MCF 10A (cell line): ENCODE measurements at regions of chr20 and their contacts with region 1.

Region 1: DNA sequence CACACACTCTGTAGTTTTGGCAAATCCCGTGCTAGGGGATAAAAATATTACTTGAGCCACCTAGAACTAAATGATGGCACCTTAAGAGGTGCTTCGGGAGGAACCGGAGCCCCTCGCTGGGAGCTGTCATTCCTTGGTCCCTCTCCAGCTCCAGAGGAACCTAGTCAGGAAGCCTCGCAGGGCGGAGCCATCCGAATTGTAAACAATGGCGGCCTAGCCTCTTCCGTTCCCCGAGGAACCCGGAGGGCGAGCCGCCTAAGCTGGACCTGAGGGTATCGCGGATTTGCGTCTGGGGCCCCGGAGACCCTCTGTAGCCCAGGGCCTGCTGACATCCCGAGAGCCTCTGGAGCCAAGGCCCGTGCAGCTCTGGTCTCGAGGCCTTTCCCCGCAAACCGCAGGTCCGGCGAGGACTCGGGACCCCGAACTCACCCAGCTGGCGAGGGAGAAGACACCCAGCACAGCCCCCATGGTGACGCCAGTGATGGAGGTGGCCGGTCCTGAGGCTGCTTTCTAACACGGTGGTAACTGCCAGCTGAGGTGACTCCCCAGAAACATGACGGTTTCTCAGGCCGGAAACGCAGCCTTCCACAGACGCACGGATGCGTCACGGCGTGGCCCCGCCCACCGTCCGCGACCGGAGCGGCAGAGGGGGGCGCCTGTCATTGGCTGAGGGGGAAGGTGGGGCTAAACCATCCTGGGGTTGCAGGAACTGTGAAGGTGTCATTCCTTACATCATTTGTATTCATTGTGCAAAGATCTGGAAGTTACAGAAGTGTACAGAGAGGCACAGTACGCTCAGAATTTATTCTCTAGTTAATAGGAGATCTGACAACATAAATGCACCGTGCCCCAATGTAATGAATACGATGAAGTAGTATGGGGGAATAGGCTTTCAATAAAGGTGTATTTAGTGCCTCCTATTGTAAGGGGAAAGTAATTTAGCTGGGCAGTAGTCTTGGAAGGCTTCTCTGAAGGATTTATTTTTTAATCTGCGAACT is at the start of gene SERINC3:
- DNase-seq: peak; percentile 95
- H3K4me3 Mint-ChIP-seq: peak within 1 kb of the TSS; percentile 84
- H3K27ac Mint-ChIP-seq: peak within 1 kb of the TSS; percentile 95
- H3K4me1 Mint-ChIP-seq: peaks cover 35% of the 10 kb centered on the region
- H3K27me3 Mint-ChIP-seq: no peaks in the 10 kb centered on the region
- CTCF ChIP-seq: no peak
- total RNA-seq, gene SERINC3: 104 and 126 TPM in 2 replicates

Region 2: GRCh38 chr20:44342248-44342647 is 179.5 kb before region 1 on chr20:
- CTCF ChIA-PET with region 1: no interaction called
- POLR2A ChIA-PET with region 1: no interaction called
- intact Hi-C with region 1: no loop called
- DNase-seq: no peak
- H3K4me3 Mint-ChIP-seq: no peak overlapping the region
- H3K27ac Mint-ChIP-seq: no peak overlapping the region
- H3K4me1 Mint-ChIP-seq: no peaks in the 10 kb centered on the region
- H3K27me3 Mint-ChIP-seq: no peaks in the 10 kb centered on the region
- CTCF ChIP-seq: no peak

Region 3: GRCh38 chr20:44475694-44476560 is 45.9 kb before region 1 on chr20 and contains the start of gene TTPAL:
- CTCF ChIA-PET with region 1: interaction called, 5 read pairs
- POLR2A ChIA-PET with region 1: interaction called, 62 read pairs
- intact Hi-C with region 1: loop called (anchors 10 kb)
- DNase-seq: peak; percentile 89
- H3K4me3 Mint-ChIP-seq: peak within 1 kb of the TSS; percentile 98
- H3K27ac Mint-ChIP-seq: peak within 1 kb of the TSS; percentile 98
- H3K4me1 Mint-ChIP-seq: peaks cover 23% of the 10 kb centered on the region
- H3K27me3 Mint-ChIP-seq: no peaks in the 10 kb centered on the region
- CTCF ChIP-seq: no peak
- total RNA-seq, gene TTPAL: 34.1 and 35.4 TPM in 2 replicates

Region 4: GRCh38 chr20:44501448-44501847 is 20.3 kb before region 1 on chr20:
- CTCF ChIA-PET with region 1: interaction called, 6 read pairs
- POLR2A ChIA-PET with region 1: interaction called, 56 read pairs
- intact Hi-C with region 1: loop called (anchors 2 kb)
- DNase-seq: peak; percentile 27
- H3K4me3 Mint-ChIP-seq: no peak overlapping the region
- H3K27ac Mint-ChIP-seq: peak overlapping the region; percentile 10
- H3K4me1 Mint-ChIP-seq: peaks cover 23% of the 10 kb centered on the region
- H3K27me3 Mint-ChIP-seq: no peaks in the 10 kb centered on the region
- CTCF ChIP-seq: no peak

Region 5: DNA sequence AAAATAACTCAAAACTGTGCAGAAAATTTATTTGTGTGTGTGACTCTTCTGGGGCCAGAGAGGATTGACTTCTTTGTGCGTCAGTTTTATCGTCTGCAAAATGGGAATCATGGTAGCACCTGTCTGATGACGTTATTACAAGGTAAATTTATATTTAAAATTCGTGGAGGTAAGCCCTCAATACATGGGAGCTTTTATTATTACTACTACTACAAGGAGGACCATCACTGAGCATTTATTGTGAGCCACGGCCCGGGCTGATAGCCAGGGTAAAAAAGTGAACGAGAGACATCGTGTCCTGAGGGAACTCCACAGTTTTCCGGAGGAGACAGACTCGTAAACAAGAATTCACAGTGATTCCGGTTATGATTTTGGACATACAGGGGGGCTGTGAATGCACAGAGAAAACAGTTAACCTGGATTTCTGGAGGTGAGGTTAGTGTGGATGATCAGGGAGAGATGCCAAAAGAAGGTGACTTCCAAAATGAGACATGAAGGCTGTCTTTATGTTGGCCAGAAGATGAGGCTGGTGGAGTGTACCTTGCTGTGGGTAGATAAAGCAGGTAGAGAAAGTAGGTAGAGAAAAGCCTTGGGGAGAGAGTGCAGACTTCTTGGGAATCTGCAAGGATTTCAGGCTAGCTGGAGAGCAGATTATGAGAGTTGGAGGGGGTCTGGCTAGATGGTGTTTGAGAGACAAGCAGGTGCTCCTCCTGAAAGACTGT is 10.6 kb after region 1 on chr20:
- CTCF ChIA-PET with region 1: interaction called, 3 read pairs
- POLR2A ChIA-PET with region 1: interaction called, 57 read pairs
- intact Hi-C with region 1: no loop called
- DNase-seq: peak; percentile 5
- H3K4me3 Mint-ChIP-seq: no peak overlapping the region
- H3K27ac Mint-ChIP-seq: no peak overlapping the region
- H3K4me1 Mint-ChIP-seq: peaks cover 10% of the 10 kb centered on the region
- H3K27me3 Mint-ChIP-seq: no peaks in the 10 kb centered on the region
- CTCF ChIP-seq: no peak

Region 6: GRCh38 chr20:44576297-44576696 is 54.5 kb after region 1 on chr20:
- CTCF ChIA-PET with region 1: no interaction called
- POLR2A ChIA-PET with region 1: interaction called, 17 read pairs
- intact Hi-C with region 1: loop called (anchors 5 kb)
- DNase-seq: peak; percentile 53
- H3K4me3 Mint-ChIP-seq: no peak overlapping the region
- H3K27ac Mint-ChIP-seq: no peak overlapping the region
- H3K4me1 Mint-ChIP-seq: peaks cover 27% of the 10 kb centered on the region
- H3K27me3 Mint-ChIP-seq: no peaks in the 10 kb centered on the region
- CTCF ChIP-seq: no peak